ENCODE measurements at regions of chr5 and their contacts with region 1.

Region 1: DNA sequence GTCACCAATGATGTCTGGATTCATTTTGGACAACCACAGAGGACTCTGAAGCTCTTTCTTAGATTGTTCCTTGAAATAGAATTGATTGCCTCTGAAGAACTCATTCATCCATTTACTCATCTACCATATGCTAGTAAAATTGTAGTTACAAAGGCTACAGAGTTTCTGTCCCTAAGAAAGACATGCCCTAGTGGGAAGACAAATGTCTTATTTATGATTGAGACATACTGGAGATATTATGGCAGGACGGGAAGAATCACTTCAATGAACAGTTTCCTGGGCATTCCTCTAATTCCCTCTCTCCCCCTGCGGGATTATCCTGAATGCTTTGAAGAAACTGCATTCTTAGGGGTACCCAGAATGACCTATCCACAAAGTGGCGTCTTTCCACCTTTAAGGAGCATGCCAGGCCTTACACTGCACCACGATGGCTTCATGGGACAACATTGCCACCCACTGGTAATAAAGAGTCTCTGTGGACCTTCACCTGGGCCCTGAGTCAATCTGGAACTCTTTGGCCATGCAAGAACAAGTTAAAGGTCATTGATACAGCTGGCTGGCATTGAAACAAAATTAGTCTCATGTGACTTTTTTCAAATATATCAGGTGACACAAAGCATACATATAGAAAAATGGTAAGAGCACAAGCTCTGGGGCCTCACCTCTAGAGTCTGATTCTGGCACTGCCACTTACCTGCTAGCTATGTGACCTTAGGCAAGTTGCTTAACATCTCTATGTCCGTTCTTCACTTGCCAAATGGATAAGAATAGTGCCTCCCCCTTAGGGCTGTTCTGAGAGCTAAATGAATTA is 32.1 kb downstream of the ANKRD55 start:
- H3K4me3 Mint-ChIP-seq: no peak overlapping the region
- H3K27ac Mint-ChIP-seq: no peak overlapping the region
- H3K4me1 Mint-ChIP-seq: peaks cover 21% of the 10 kb centered on the region
- H3K27me3 Mint-ChIP-seq: no peaks in the 10 kb centered on the region

Region 2: GRCh38 chr5:55936100-55936693 is 264.9 kb before region 1 on chr5:
- intact Hi-C with region 1: loop called (anchors 1 kb)
- H3K4me3 Mint-ChIP-seq: no peak overlapping the region
- H3K27ac Mint-ChIP-seq: no peak overlapping the region
- H3K4me1 Mint-ChIP-seq: no peaks in the 10 kb centered on the region
- H3K27me3 Mint-ChIP-seq: no peaks in the 10 kb centered on the region

Region 3: DNA sequence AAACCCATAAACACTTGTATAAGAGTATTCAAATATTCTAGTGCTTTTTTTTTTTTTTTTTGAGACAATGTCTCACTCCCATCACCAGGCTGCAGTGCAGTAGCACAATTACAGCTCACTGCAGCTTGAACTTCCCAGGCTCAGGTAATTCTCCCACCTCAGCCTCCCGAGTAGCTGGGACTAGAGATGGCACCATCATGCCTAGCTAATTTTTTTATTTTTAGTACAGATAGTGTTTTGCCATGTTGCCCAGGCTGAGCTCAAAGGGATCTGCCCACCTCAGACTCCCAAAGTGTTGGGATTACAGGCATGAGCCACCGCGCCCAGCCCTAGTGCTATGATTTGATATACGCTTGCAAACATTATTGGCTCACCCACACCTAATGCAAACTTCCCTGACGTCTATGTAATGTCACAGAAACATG is 218.1 kb before region 1 on chr5:
- intact Hi-C with region 1: loop called (anchors 1 kb)
- H3K4me3 Mint-ChIP-seq: no peak overlapping the region
- H3K27ac Mint-ChIP-seq: no peak overlapping the region
- H3K4me1 Mint-ChIP-seq: peaks cover 44% of the 10 kb centered on the region
- H3K27me3 Mint-ChIP-seq: no peaks in the 10 kb centered on the region

Measured in dendritic cell treated with granulocyte-macrophage colony-stimulating factor and Interleukin-4, amounts not matched to agents 40 ng/mL and 50 ng/mL, for 4 days (primary cell).